Cardiac septum (tissue), 1 donor: ENCODE measurements at regions of chr6 and their contacts with region 1.

Region 1: DNA sequence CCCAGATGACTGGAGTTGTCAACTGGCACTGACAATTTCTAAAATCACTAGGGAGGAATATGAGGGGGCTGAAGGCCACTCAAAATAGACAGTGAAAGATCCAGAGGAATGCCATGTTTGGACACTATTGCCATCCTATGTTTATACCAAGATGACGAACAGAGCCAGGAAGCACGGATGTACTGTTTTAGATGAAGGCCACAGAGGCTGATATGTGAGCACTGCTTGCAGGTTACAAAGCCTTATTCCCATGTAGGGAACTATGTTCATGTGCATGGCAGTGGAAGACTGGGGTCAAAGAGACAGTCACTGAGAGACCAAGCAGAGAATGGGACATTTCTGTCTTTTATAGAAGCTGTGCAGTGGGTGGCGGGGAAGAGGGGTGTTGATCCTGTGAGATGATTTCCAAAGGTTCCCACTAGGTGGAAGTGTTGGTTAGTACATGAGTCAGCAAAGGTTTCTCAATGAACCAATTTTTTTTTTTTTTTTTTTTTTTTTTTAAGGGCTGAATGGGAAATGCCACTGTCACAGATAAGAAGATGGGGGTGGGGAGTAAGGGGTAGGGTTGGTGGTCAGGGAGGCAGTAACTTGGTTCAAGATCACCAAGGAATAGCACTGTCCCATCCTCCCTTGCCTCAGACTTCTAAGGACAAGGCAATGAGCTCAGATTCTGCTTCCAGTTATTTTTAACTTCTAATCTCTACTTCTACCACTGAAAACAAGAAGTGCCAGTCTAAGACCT is 46.7 kb upstream of the MOCS1 start:
- DNase-seq: no peak

Region 2: DNA sequence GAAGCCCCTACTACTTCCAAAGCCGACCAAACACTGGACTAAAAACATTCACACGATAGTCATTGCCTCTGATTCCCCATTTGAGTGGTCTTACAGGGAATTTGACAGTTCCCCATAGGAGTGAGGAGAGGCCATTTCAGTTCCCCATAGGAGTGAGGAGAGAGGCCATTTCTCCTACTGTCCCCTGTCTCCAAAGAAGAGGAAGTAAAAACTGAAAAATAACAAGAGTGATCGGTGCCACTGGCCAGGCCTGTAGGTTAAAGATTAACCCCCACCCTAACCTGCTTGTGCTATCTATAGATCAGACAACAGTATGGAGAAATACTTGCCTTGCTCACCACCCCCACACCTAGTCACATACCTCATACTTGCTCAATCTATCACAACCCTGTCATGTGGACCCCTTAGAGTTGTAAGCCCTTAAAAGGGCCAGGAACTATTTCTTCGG is 157.3 kb after region 1 on chr6:
- intact Hi-C with region 1: no loop called
- DNase-seq: no peak

Region 3: GRCh38 chr6:40308533-40309306 is 327.7 kb after region 1 on chr6:
- intact Hi-C with region 1: loop called (anchors 2 kb)
- DNase-seq: no peak

Region 4: DNA sequence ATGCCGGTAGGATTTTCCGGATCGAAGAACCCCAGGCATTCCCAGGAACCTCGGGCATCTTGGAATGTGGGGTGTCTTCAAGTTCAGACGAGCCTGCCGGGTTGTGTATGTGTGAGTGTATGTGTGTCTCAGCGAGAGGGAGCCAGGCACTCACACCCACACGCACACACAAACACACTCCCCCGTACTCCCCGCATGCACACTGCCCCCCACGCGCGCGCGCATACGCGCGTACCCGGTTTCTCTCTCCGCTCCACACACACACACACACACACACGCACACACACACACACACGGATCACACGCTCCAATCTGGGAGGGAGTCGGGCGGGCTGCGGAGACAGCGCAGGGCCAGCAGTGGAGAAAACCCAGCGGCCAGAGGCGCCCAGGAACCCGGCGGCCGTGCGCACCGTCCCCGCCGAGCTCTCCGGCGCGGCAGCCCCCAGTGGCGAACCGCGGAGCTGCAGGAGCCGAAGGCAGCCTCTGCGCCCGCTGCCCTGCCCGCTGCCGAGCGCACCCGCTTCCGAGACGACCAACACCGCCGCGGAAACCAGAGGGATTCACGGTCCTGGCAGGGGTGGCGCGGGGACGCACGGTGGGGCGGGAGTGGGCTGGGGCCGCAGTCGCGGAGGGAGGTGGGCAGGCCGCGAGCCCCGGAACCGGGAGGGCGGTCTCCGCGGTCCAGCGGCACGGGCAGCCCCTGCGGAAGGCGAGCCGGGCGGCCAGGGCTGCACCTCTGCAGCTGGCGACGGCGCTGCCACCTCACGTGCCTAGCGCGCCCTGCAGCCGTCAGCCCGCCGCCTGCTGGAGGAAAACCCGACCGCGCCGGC is 606.4 kb after region 1 on chr6 and contains the start of gene LRFN2:
- intact Hi-C with region 1: loop called (anchors 10 kb)
- DNase-seq: no peak
- total RNA-seq, gene LRFN2: not detected

Region 5: DNA sequence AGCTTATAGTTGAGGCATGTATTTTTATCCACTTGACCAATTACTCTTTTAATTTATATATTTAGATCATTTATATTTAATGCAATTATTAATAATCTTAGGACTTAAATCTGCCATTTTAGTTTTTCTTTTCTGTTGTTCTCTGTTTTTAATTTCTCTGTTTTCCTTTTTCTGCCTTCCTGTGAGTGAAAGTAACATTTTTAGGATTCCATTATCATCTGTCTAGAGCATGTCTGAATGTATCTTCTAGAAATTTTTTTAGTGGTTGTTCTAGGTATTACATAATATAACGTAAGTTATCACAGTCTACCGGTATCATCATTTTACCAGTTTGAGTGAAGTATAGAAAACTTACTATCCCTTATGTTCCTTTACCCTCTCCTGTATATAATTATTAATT is 860.7 kb after region 1 on chr6:
- intact Hi-C with region 1: loop called (anchors 5 kb)
- DNase-seq: no peak